ENCODE measurements at regions of chr7 and their contacts with region 1.

Region 1: GRCh38 chr7:50246551-50246950 is 58.0 kb upstream of the IKZF1 start:
- DNase-seq: no peak
- H3K4me3 Mint-ChIP-seq: no peak overlapping the region
- H3K27ac Mint-ChIP-seq: no peak overlapping the region
- H3K4me1 Mint-ChIP-seq: peaks cover 12% of the 10 kb centered on the region
- H3K27me3 Mint-ChIP-seq: no peaks in the 10 kb centered on the region

Region 2: GRCh38 chr7:50037086-50037485 is 209.5 kb before region 1 on chr7:
- intact Hi-C with region 1: no loop called
- DNase-seq: no peak
- H3K4me3 Mint-ChIP-seq: no peak overlapping the region
- H3K27ac Mint-ChIP-seq: no peak overlapping the region
- H3K4me1 Mint-ChIP-seq: no peaks in the 10 kb centered on the region
- H3K27me3 Mint-ChIP-seq: no peaks in the 10 kb centered on the region

Region 3: DNA sequence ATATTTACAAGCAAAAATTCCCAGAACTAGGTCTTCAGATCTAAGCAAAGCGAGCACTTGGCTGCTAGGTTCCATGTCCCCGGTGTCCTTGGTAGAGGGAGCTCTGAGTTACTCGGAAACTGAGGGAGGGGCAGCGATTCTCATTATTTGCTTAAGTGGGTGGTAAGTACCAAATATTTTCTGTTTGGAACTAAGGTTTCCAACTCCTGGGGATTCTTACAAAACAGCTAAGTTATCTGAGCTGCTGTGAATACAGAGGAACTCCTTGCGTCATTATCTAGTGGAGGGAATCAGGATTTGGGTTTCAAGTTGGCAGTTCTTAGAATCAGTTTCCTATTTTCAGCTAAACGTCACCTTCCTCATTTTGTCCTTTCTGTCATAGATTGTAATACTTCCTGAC is 18.8 kb before region 1 on chr7:
- intact Hi-C with region 1: loop called (anchors 2 kb)
- DNase-seq: no peak
- H3K4me3 Mint-ChIP-seq: peak overlapping the region; percentile 52
- H3K27ac Mint-ChIP-seq: peak overlapping the region; percentile 91
- H3K4me1 Mint-ChIP-seq: peaks cover 46% of the 10 kb centered on the region
- H3K27me3 Mint-ChIP-seq: no peaks in the 10 kb centered on the region

Region 4: GRCh38 chr7:50261593-50261992 is 15.0 kb after region 1 on chr7:
- intact Hi-C with region 1: loop called (anchors 1 kb)
- DNase-seq: no peak
- H3K4me3 Mint-ChIP-seq: peak overlapping the region; percentile 70
- H3K27ac Mint-ChIP-seq: peak overlapping the region; percentile 98
- H3K4me1 Mint-ChIP-seq: peaks cover 73% of the 10 kb centered on the region
- H3K27me3 Mint-ChIP-seq: no peaks in the 10 kb centered on the region